Motor neuron (in vitro differentiated cells): ENCODE measurements at regions of chr2 and their contacts with region 1.

Region 1: GRCh38 chr2:230987137-230988020 is 8.5 kb upstream of the SPATA3 start:
- ATAC-seq: peak; percentile 95 to 99 (median 97)
- H3K4me3 ChIP-seq: peak overlapping the region in 4 of 5 donors; percentile 17 to 35 (median 28)
- H3K27ac ChIP-seq: no peak overlapping the region
- H3K4me1 ChIP-seq: peaks cover 0 to 2% of the 10 kb centered on the region in 2 donors

Region 2: DNA sequence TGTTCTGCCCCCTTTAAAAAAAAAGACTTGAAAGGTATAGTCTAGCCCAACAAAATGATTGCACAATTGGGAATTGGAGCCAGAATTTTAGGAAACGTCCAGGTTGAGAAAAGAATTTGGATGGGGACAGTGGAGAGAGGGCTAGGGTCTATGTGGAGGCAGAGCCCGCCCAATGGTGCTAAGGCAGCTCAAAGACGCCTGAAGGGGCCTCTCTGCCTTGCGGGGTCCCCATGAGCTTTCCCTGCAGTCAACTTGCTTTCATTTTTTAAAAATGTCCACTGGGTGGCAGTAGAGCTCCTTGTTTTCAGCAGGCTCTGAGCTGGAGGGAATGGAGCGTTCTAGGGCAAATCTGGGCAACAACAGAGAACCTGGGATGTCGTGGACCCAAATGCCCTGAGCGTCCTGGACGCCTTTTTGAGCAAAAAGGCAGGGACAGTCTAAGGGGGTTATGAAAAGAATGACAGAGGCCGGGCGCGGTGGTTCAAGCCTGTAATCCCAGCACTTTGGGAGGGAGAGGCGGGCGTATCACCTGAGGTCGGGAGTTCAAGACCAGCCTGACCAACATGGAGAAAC is 162.9 kb before region 1 on chr2:
- in situ Hi-C with region 1: loop called in 6 of 9 experiments (anchors 10 to 25 kb)
- ATAC-seq: peak; percentile 60 to 97 (median 92)
- H3K4me3 ChIP-seq: no peak overlapping the region
- H3K27ac ChIP-seq: no peak overlapping the region
- H3K4me1 ChIP-seq: no peaks in the 10 kb centered on the region

Region 3: GRCh38 chr2:230830428-230830827 is 157.0 kb before region 1 on chr2:
- in situ Hi-C with region 1: loop called in 8 of 9 experiments (anchors 10 to 25 kb)
- ATAC-seq: peak in 3 of 8 experiments; percentile 24 to 39 (median 29)
- H3K4me3 ChIP-seq: no peak overlapping the region
- H3K27ac ChIP-seq: no peak overlapping the region
- H3K4me1 ChIP-seq: no peaks in the 10 kb centered on the region

Region 4: GRCh38 chr2:230847883-230848388 is 139.4 kb before region 1 on chr2:
- in situ Hi-C with region 1: loop called in 1 of 9 experiments (anchors 25 kb)
- ATAC-seq: peak; percentile 70 to 99 (median 90)
- H3K4me3 ChIP-seq: no peak overlapping the region
- H3K27ac ChIP-seq: no peak overlapping the region
- H3K4me1 ChIP-seq: peaks cover 0 to 2% of the 10 kb centered on the region in 2 donors

Region 5: DNA sequence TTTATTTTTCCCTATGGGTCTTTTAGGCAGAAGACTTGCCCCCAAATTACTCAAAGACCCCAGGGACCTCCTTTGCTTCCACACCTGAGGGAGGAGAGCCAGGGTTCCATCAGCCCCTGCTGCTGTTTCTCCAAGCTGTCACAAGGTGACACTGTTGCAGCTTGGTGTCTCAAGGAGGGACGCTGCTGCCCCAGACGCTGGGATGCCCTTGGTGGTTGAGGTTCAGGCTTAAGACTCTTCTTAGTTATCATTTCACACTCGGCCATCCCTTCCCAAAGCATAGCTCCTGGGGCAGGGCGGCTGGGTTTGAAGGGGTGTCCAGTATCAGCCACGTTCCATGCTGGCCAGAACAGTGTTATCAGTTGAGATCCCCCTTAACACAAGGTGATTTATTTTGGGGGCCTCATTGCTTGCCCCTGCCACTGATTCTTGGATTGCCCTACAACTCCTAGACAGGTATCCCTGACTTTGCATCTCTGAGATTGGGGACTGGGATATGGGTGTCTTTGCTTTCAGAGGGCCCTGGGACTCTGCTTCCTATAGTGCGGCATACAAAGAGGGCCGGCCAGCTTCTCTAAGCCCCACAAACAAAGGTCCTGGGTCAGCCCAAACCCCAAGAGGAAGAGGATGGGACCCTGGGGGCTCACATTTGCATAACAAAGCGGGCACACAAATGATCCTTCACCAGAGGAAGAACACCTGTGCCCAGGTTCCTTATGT is 85.0 kb before region 1 on chr2:
- in situ Hi-C with region 1: loop called in 2 of 9 experiments (anchors 5 to 10 kb)
- ATAC-seq: peak in 7 of 8 experiments; percentile 22 to 97 (median 70)
- H3K4me3 ChIP-seq: no peak overlapping the region
- H3K27ac ChIP-seq: no peak overlapping the region
- H3K4me1 ChIP-seq: peaks cover 5 to 20% of the 10 kb centered on the region in 2 donors

Region 6: GRCh38 chr2:231152800-231153557 is 165.6 kb after region 1 on chr2:
- in situ Hi-C with region 1: no loop called
- ATAC-seq: no peak
- H3K4me3 ChIP-seq: no peak overlapping the region
- H3K27ac ChIP-seq: no peak overlapping the region
- H3K4me1 ChIP-seq: no peaks in the 10 kb centered on the region

Region 7: DNA sequence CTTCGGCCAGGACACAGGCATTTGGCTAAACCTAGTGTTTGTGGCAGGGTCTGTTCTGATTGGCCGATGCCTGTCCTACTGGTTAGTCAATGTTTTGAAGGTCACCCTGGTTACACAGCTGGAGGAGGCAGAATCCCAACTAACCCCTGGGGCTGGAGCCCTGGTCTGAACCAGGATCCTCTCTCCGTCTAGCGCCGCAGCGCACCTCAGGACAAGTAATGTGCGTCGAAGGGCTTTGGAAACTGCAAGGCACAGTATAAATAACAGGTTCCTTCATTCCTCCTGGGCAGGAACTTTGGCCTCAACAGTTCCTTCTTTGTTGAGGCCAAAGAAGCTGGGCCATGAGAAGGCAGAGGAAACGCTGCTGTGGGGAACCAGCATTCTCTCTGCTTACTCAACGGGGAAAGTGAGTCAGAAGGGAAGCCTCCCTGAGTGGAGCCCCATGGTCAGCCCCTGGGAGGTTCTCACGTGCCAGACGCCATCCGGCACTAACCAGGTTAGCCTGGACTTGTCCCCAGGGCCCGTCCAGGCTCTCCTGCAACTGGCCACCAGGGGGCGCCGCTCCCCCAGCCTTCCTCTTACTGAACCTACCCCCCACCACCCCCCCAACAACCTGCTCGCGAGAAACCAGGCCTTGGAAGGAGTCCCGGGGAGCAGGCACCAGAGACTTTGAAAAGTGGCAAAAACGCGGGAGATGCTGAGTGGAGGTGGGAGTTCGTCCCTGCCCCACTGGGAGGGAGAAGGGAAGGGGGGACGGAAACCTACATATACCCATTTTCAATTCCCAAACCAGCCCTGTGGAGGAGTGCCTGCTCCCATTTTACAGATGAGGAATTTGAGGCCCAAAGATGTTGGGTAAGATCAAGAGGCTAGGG is 625.0 kb after region 1 on chr2:
- in situ Hi-C with region 1: no loop called
- ATAC-seq: peak in 5 of 8 experiments; percentile 5 to 63 (median 39)
- H3K4me3 ChIP-seq: no peak overlapping the region
- H3K27ac ChIP-seq: peak overlapping the region; percentile 88 to 97
- H3K4me1 ChIP-seq: peaks cover 28 to 33% of the 10 kb centered on the region in 2 donors